Activated CD4-positive, alpha-beta T cell treated with anti-CD3 and anti-CD28 coated beads, Interleukin-2, amount 10 ng/mL, durations not matched to agents 24 days and 14 days (primary cell): ENCODE measurements at regions of chr12 and their contacts with region 1.

Region 1: GRCh38 chr12:131092901-131093603 is 139.3 kb downstream of the ADGRD1 start:
- DNase-seq: peak; percentile 65
- H3K4me3 Mint-ChIP-seq: peak overlapping the region; percentile 26
- H3K27ac Mint-ChIP-seq: peak overlapping the region; percentile 23
- H3K4me1 Mint-ChIP-seq: peaks cover 12% of the 10 kb centered on the region
- H3K27me3 Mint-ChIP-seq: no peaks in the 10 kb centered on the region

Region 2: GRCh38 chr12:130826149-130826801 is 266.8 kb before region 1 on chr12:
- intact Hi-C with region 1: loop called (anchors 10 kb)
- DNase-seq: peak; percentile 88
- H3K4me3 Mint-ChIP-seq: no peak overlapping the region
- H3K27ac Mint-ChIP-seq: no peak overlapping the region
- H3K4me1 Mint-ChIP-seq: peaks cover 11% of the 10 kb centered on the region
- H3K27me3 Mint-ChIP-seq: no peaks in the 10 kb centered on the region

Region 3: GRCh38 chr12:131028615-131029338 is 64.3 kb before region 1 on chr12:
- intact Hi-C with region 1: no loop called
- DNase-seq: no peak
- H3K4me3 Mint-ChIP-seq: no peak overlapping the region
- H3K27ac Mint-ChIP-seq: no peak overlapping the region
- H3K4me1 Mint-ChIP-seq: no peaks in the 10 kb centered on the region
- H3K27me3 Mint-ChIP-seq: no peaks in the 10 kb centered on the region

Region 4: DNA sequence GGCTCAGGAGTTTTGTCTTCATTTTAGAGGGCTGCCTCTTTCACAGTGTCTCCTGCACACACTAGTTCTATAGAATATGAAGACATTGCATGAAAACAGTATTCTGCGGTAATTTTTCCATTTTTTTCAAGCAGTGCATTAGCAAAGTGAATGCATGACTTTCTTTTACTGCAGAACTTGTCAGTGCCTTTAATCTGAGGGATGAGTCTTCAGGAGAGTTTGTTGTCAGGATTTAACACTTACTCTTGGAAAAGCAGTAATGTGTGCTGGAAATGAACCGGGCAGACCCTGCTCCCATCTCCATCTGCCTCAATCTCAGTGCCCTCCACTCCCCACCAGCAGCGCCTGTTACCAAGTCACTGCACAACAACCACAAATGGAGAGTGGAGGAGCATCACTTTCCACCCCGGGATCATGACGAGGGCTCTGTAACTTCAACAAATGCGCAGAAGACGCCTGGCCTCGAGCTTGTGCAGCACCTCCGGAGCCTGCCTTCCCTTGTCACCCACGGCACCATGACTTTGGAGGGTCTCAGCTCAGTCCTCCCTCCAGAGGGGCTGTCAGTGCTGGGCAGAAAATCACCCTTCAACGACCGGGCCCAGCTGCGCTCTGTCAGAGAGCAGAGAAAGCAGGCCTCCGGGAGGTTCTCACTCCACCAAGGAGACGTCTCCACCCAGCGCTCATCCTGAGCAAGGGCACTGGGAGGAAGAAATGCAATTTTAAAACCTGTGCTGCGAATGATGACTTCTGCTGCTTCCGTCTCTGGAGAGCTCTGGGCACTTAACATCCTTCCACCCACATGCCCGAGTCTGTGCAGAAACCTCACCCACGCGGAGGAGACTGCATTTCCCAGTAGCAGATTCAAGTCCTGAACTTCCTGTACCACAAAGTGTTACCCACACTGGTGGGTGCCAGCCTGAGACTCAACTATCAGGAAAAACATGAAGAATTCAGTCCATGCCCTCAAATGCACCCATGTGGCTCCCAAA is 116.3 kb after region 1 on chr12:
- intact Hi-C with region 1: loop called (anchors 5 kb)
- DNase-seq: no peak
- H3K4me3 Mint-ChIP-seq: no peak overlapping the region
- H3K27ac Mint-ChIP-seq: peak overlapping the region; percentile 49
- H3K4me1 Mint-ChIP-seq: peaks cover 19% of the 10 kb centered on the region
- H3K27me3 Mint-ChIP-seq: no peaks in the 10 kb centered on the region